Lower leg skin (tissue), 4 donors: ENCODE measurements at regions of chr6 and their contacts with region 1.

Region 1: DNA sequence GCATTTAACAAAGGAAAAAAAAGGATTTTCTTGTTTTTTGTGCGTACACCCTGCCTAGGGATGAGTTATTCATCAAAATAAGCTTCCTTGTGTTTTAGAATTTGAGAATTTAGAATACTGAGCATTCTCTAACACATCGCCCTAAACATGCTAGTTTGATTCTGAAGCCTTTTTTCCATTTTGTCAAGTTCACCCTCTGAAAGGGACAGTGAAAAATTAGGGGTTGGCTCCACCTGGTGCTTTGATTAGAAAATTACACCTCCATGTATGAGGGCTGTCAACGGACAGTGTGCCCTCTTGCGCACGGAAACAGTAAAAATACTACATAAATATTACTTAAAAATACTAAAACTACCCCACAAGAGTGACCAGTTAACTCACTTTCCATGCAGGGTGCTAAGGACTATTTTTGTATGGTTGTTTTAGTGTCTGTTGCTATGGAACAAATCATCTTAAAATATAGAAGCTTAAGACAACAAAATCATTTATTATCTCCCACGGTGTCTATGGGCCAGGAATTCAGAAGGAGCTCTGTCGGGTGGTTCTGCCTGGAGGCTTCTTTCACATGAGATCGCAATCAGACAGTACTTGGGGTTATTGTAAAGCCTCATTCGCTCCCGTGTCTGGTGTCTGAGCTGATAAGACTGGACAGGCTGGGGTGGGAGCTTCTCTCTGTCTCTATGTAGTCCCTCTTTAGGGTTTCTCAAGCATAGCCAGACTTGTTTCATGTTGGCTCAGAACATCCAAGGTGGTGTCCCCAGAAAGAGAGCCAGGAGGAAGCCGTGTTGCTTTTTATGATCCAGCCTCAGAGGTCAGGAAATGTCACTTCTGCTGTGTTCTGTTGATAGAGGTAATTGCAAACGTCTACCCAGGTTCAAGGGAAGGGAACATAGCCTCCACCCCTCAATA is 41.1 kb upstream of the TMEM170B start:
- DNase-seq: peak in 1 of 2 donors; percentile 68
- H3K4me3 ChIP-seq: no peak overlapping the region
- CTCF ChIP-seq: peak in 1 of 3 donors; percentile 58
- POLR2A ChIP-seq: no peak

Region 2: GRCh38 chr6:11144393-11144851 is 352.0 kb before region 1 on chr6:
- intact Hi-C with region 1: loop called (anchors 2 kb)
- DNase-seq: peak; percentile 71 to 94
- H3K4me3 ChIP-seq: no peak overlapping the region
- CTCF ChIP-seq: peak in 1 of 3 donors; percentile 91
- POLR2A ChIP-seq: no peak